Activated B cell treated with CpG ODN at 0.5 μM for 24 hours (primary cell): ENCODE measurements at regions of chr7 and their contacts with region 1.

Region 1: DNA sequence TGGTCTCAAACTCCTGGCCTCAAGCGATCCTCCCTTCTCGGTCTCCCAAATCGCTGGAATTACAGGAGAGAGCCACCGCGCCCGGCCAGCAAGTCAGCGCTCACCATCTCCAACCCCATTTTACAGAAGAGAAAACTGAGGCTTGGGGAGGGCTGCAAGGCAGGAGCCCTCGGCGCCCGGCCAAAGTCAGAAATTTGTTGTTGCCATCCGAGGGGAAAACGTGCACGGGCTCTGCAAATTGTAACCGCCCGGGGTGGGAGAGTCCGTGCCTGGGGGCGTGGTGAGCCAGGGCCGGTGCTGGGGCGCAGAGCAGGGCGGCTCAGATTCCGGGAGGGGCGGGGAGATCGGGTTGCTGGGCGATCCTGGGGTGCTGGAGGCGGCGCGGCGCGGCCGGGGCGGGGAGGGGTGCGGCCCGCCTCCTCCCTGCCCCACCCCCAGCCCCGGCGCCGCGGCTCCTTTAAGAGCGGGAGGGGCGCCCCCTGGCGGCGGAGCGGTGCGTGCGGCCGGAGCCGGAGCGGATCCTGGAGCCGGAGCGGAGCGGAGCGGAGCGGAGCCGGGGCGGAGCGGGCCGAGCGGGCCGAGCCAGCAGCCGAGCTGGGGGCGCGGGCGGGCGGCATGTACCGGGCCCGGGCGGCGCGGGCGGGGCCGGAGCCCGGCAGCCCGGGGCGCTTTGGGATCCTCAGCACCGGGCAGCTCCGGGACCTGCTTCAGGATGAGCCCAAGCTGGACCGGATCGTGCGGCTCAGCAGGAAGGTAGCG is at the start of gene VPS37D:
- DNase-seq: peak; percentile 97
- ATAC-seq: peak; percentile 91
- H3K4me3 Mint-ChIP-seq: peak within 1 kb of the TSS; percentile 78
- H3K27ac Mint-ChIP-seq: no peak within 1 kb of the TSS
- H3K4me1 Mint-ChIP-seq: peaks cover 6% of the 10 kb centered on the region
- H3K27me3 Mint-ChIP-seq: peaks cover 25% of the 10 kb centered on the region
- CTCF ChIP-seq: no peak
- total RNA-seq, gene VPS37D: 0.17 and 0.24 TPM in 2 replicates

Region 2: DNA sequence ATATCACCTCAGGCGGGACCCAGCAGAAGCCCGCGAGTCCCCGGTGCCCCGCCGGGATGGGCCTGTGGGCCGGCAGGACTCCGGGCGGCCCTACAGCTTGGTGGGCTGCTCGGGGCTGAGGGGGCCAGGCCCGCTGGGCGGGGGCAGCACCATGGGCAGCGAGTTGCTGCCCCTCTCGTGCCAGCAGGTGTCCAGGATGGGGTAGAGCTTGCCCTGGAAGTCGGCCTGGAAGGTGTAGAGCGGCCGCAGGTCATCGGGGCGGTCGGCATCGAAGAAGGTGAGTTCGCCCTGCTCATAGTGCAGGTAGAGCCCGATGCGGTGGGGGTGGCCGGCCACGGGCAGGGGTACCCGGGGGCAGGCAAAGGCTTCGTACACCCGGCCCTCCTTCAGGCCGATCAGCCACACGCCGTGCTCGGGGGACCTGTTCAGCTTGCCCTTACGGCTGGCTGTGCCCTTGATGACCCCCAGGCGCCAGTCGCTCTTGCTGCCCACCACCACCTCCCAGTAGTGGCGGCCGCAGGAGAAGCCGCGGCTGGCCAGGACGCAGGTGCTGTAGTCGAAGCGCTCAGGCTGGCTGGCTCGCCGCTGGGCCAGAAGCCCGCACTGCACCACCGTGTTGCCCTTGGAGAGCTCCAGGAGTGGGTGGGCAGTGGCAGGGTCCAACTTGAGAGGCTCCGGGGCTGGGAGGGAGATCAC is 354.5 kb before region 1 on chr7:
- CTCF ChIA-PET with region 1: no interaction called
- POLR2A ChIA-PET with region 1: no interaction called
- intact Hi-C with region 1: no loop called
- DNase-seq: no peak
- ATAC-seq: no peak
- H3K4me3 Mint-ChIP-seq: no peak overlapping the region
- H3K27ac Mint-ChIP-seq: no peak overlapping the region
- H3K4me1 Mint-ChIP-seq: peaks cover 12% of the 10 kb centered on the region
- H3K27me3 Mint-ChIP-seq: no peaks in the 10 kb centered on the region
- CTCF ChIP-seq: no peak

Region 3: DNA sequence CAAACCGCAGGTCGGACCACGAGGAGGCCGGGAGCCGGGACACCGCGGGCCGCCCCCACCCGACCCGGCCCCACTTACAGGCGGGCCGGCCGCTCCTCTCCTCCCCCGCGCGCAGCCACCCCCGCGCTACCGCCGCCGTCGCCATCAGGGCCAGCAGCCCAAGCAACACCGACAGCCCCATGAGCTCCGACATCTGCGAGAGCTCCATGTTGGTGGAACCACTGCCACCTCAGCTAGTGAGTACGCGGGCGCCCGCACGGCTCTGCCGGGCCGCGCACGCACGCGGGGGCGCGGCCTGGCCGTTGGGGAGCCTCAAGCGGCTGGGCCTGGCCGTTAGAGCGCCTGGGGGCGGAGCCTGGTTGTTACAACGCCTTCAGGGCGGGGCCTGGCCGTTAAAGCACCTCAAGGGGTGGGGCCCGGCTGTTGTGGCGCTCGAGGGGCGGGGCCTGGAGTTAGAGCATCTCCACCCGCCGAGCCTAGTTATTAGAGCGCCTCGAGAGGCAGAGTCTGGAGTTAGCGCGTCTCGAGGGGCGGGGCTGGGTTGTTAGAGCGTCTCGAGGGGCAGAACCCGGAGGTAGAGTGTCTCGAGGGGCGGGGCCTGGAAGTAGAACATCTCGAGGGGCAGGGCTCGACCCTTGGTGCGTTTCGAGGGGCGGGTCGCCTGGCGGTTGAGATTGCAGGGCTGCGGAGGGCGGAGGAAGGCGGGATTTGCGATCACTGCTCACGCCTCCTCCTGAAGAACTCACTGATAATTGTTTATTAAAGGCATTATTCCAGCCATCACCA is 89.0 kb before region 1 on chr7 and contains the start of gene TBL2:
- CTCF ChIA-PET with region 1: no interaction called
- POLR2A ChIA-PET with region 1: no interaction called
- intact Hi-C with region 1: loop called (anchors 1 kb)
- DNase-seq: peak; percentile 97
- ATAC-seq: peak; percentile 89
- H3K4me3 Mint-ChIP-seq: peak within 1 kb of the TSS; percentile 90
- H3K27ac Mint-ChIP-seq: peak within 1 kb of the TSS; percentile 92
- H3K4me1 Mint-ChIP-seq: peaks cover 22% of the 10 kb centered on the region
- H3K27me3 Mint-ChIP-seq: no peaks in the 10 kb centered on the region
- CTCF ChIP-seq: no peak
- total RNA-seq, gene TBL2: 26.1 and 33.5 TPM in 2 replicates

Region 4: GRCh38 chr7:73626814-73627213 is 40.7 kb before region 1 on chr7:
- CTCF ChIA-PET with region 1: no interaction called
- POLR2A ChIA-PET with region 1: no interaction called
- intact Hi-C with region 1: no loop called
- DNase-seq: no peak
- ATAC-seq: no peak
- H3K4me3 Mint-ChIP-seq: no peak overlapping the region
- H3K27ac Mint-ChIP-seq: no peak overlapping the region
- H3K4me1 Mint-ChIP-seq: peaks cover 11% of the 10 kb centered on the region
- H3K27me3 Mint-ChIP-seq: peaks cover 41% of the 10 kb centered on the region
- CTCF ChIP-seq: no peak

Region 5: GRCh38 chr7:73683056-73683964 is 15.8 kb after region 1 on chr7 and contains the starts of genes BUD23 and DNAJC30:
- CTCF ChIA-PET with region 1: no interaction called
- POLR2A ChIA-PET with region 1: interaction called, 3 read pairs
- intact Hi-C with region 1: loop called (anchors 1 kb)
- DNase-seq: peak; percentile 81
- ATAC-seq: peak; percentile 98
- H3K4me3 Mint-ChIP-seq: peak within 1 kb of the TSS; percentile 97
- H3K27ac Mint-ChIP-seq: peak within 1 kb of the TSS; percentile 95
- H3K4me1 Mint-ChIP-seq: peaks cover 29% of the 10 kb centered on the region
- H3K27me3 Mint-ChIP-seq: no peaks in the 10 kb centered on the region
- CTCF ChIP-seq: no peak
- total RNA-seq, gene BUD23: 69.0 and 74.8 TPM in 2 replicates
- total RNA-seq, gene DNAJC30: 13.7 and 14.2 TPM in 2 replicates

Region 6: GRCh38 chr7:73718905-73719805 is 51.6 kb after region 1 on chr7 and contains the start of gene STX1A:
- CTCF ChIA-PET with region 1: no interaction called
- POLR2A ChIA-PET with region 1: interaction called, 9 read pairs
- intact Hi-C with region 1: loop called (anchors 2 kb)
- DNase-seq: peak; percentile 72
- ATAC-seq: peak; percentile 85
- H3K4me3 Mint-ChIP-seq: peak within 1 kb of the TSS; percentile 79
- H3K27ac Mint-ChIP-seq: no peak within 1 kb of the TSS
- H3K4me1 Mint-ChIP-seq: peaks cover 21% of the 10 kb centered on the region
- H3K27me3 Mint-ChIP-seq: peaks cover 28% of the 10 kb centered on the region
- CTCF ChIP-seq: no peak
- total RNA-seq, gene STX1A: 1.8 and 2.1 TPM in 2 replicates

Region 7: GRCh38 chr7:74026903-74027551 is 359.5 kb after region 1 on chr7:
- CTCF ChIA-PET with region 1: no interaction called
- POLR2A ChIA-PET with region 1: no interaction called
- intact Hi-C with region 1: no loop called
- DNase-seq: peak; percentile 62
- ATAC-seq: peak; percentile 85
- H3K4me3 Mint-ChIP-seq: no peak overlapping the region
- H3K27ac Mint-ChIP-seq: no peak overlapping the region
- H3K4me1 Mint-ChIP-seq: peaks cover 8% of the 10 kb centered on the region
- H3K27me3 Mint-ChIP-seq: peaks cover 56% of the 10 kb centered on the region
- CTCF ChIP-seq: peak; percentile 76